A549 (cell line): ENCODE measurements at regions of chr5 and their contacts with region 1.

Region 1: GRCh38 chr5:151659001-151659754 is 27.5 kb downstream of the SPARC start:
- DNase-seq: peak; percentile 79 to 83
- ATAC-seq: peak; percentile 97 to 98
- H3K4me3 ChIP-seq: no peak overlapping the region
- H3K27ac ChIP-seq: peak overlapping the region; percentile 45 to 81; a peak in 5 of 6 replicates
- H3K4me1 ChIP-seq: peaks cover 5% of the 10 kb centered on the region; the same call in 1 of the 3 replicates
- CTCF ChIP-seq: peak; percentile 93
- EP300 ChIP-seq: no peak
- POLR2A ChIP-seq: no peak
- RAD21 ChIP-seq: peak; percentile 98

Region 2: DNA sequence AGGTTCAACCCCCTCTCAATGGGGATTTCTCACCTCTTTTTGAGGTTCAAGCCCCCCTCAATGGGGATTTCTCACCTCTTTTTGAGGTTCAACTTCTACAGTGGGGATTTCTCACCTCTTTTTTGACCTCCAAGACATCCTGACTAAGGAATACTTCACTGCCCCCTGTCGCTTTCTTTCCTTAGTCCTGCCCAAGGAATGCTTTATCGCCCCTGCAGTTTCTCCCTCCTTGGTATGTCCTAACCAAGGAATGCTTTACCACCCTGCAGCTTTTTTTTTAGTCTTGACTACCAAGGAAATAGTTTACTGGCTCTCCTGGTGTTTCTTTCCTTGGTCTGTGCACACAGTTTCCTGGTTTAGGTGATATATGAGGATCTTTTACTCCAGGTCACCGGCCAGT is 822.5 kb before region 1 on chr5:
- CTCF ChIA-PET with region 1: no interaction called
- POLR2A ChIA-PET with region 1: no interaction called
- DNase-seq: no peak
- ATAC-seq: no peak
- H3K4me3 ChIP-seq: no peak overlapping the region
- H3K27ac ChIP-seq: no peak overlapping the region
- H3K4me1 ChIP-seq: no peaks in the 10 kb centered on the region
- CTCF ChIP-seq: no peak
- EP300 ChIP-seq: no peak
- POLR2A ChIP-seq: no peak
- RAD21 ChIP-seq: no peak

Region 3: DNA sequence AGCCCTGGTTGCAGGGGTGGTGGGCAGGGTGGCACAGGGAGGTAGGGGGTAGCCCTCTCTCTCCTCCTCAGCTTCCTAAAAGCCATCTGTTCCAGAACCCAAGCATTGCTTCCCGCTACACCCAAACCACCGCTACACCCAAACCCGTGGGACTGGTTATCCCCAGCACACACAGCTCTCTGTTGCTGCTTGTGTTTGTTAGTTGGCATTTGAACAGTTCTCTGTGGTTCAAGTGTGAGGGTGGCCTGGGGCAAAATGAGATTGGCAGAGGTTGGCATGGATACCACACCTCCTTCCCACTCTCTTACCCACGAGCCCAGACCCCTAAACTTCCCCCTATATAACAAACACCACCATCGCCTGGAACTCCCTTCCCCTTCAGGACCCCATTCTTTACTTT is 12.8 kb before region 1 on chr5:
- CTCF ChIA-PET with region 1: interaction called, 18 read pairs
- POLR2A ChIA-PET with region 1: no interaction called
- DNase-seq: no peak
- ATAC-seq: no peak
- H3K4me3 ChIP-seq: no peak overlapping the region
- H3K27ac ChIP-seq: no peak overlapping the region
- H3K4me1 ChIP-seq: no peaks in the 10 kb centered on the region
- CTCF ChIP-seq: no peak
- EP300 ChIP-seq: no peak
- POLR2A ChIP-seq: no peak
- RAD21 ChIP-seq: no peak

Region 4: GRCh38 chr5:151684690-151685361 is 25.6 kb after region 1 on chr5:
- CTCF ChIA-PET with region 1: interaction called, 26 read pairs
- POLR2A ChIA-PET with region 1: interaction called, 3 read pairs
- DNase-seq: peak in 1 of 2 experiments; percentile 74
- ATAC-seq: peak; percentile 72 to 83
- H3K4me3 ChIP-seq: no peak overlapping the region
- H3K27ac ChIP-seq: peak overlapping the region; percentile 70 to 86
- H3K4me1 ChIP-seq: peaks cover 39% of the 10 kb centered on the region
- CTCF ChIP-seq: no peak
- EP300 ChIP-seq: no peak
- POLR2A ChIP-seq: no peak
- RAD21 ChIP-seq: peak in 1 of 2 experiments; percentile 2; a peak in 1 of 5 replicates

Region 5: GRCh38 chr5:151719228-151720000 is 60.2 kb after region 1 on chr5:
- CTCF ChIA-PET with region 1: interaction called, 20 read pairs
- POLR2A ChIA-PET with region 1: no interaction called
- DNase-seq: peak in 1 of 2 experiments; percentile 33
- ATAC-seq: peak in 1 of 2 experiments; percentile 76; a peak in 3 of 6 replicates
- H3K4me3 ChIP-seq: no peak overlapping the region
- H3K27ac ChIP-seq: peak overlapping the region in 1 of 2 experiments; percentile 66; a peak in 3 of 6 replicates
- H3K4me1 ChIP-seq: peaks cover 12% of the 10 kb centered on the region; the same call in 2 of the 3 replicates
- CTCF ChIP-seq: peak; percentile 40
- EP300 ChIP-seq: no peak
- POLR2A ChIP-seq: no peak
- RAD21 ChIP-seq: peak; percentile 57 to 59

Region 6: GRCh38 chr5:151870820-151871219 is 211.6 kb after region 1 on chr5:
- CTCF ChIA-PET with region 1: no interaction called
- POLR2A ChIA-PET with region 1: no interaction called
- DNase-seq: peak; percentile 32 to 38
- ATAC-seq: peak; percentile 76 to 89
- H3K4me3 ChIP-seq: no peak overlapping the region
- H3K27ac ChIP-seq: no peak overlapping the region
- H3K4me1 ChIP-seq: peaks cover 5% of the 10 kb centered on the region; the same call in 1 of the 3 replicates
- CTCF ChIP-seq: no peak
- EP300 ChIP-seq: no peak
- POLR2A ChIP-seq: no peak
- RAD21 ChIP-seq: no peak